AG04450 (cell line): ENCODE measurements at regions of chr1 and their contacts with region 1.

Region 1: GRCh38 chr1:107782217-107782845 is 182.6 kb downstream of the VAV3 start:
- DNase-seq: peak; percentile 18
- H3K4me3 ChIP-seq: no peak overlapping the region
- H3K27ac ChIP-seq: no peak overlapping the region
- H3K27me3 ChIP-seq: no peaks in the 10 kb centered on the region
- CTCF ChIP-seq: peak; percentile 71

Region 2: DNA sequence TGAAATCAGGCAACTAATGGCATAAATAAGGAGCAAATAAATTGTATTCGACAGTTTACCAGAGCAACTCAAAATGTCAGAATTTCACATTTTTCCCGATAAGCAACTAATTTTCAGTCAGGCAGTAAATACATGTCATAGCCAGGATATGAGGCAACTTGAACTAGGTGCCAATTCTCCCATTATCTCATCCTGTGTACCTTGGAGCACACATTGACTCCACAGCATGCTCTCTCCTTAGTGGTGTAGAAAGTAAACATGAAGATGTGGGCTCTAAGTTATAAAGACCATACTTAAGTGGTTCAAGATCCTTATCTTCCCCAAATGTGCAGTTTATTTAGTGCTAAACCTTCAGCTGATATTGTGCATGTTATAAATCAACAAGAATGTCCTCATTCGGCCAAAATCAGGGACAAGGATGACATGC is 15.2 kb before region 1 on chr1:
- CTCF ChIA-PET with region 1: interaction called, 13 read pairs
- POLR2A ChIA-PET with region 1: no interaction called
- DNase-seq: no peak
- H3K4me3 ChIP-seq: no peak overlapping the region
- H3K27ac ChIP-seq: no peak overlapping the region
- H3K27me3 ChIP-seq: no peaks in the 10 kb centered on the region
- CTCF ChIP-seq: no peak

Region 3: DNA sequence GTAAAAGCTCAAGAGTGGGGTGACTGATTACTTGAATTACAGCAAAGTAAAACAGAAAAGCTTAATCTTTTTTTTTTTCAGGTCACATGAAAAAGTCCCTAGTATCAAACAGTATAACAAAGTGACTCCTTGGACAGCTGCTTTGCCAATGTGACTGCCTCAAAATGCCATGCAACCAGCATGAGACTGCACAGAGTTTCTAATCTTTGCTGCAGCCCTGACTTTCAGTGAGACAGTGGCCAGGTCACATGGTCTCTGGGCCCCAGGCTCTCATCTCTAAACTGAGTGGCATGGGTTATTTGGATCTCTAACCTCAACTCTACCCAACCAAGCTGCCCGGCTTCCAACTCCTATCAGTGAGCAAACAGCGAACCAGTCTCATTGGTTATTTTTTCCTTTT is 13.7 kb after region 1 on chr1:
- CTCF ChIA-PET with region 1: interaction called, 49 read pairs
- POLR2A ChIA-PET with region 1: no interaction called
- DNase-seq: no peak
- H3K4me3 ChIP-seq: no peak overlapping the region
- H3K27ac ChIP-seq: no peak overlapping the region
- H3K27me3 ChIP-seq: no peaks in the 10 kb centered on the region
- CTCF ChIP-seq: no peak

Region 4: DNA sequence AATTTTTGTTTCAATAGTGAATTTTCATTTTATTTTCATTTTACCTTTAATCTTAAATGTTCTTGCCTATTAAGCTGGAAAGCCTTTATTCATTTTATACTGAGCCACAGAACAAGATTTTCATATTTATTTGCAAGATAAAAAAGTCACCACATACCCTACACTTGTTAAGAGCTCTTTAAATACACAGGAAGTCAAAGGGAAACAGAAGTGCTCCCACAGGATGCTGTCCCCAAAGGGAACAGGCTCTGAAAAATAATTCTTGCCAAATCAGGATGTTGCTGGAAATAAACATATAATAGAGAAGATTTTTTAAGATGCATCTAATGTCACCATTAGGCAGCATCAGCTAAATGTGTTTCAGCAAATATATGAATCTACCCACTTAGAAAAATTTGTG is 69.1 kb after region 1 on chr1:
- CTCF ChIA-PET with region 1: no interaction called
- POLR2A ChIA-PET with region 1: no interaction called
- DNase-seq: no peak
- H3K4me3 ChIP-seq: no peak overlapping the region
- H3K27ac ChIP-seq: no peak overlapping the region
- H3K27me3 ChIP-seq: no peaks in the 10 kb centered on the region
- CTCF ChIP-seq: no peak

Region 5: GRCh38 chr1:108118018-108118902 is 335.9 kb after region 1 on chr1:
- CTCF ChIA-PET with region 1: interaction called, 422 read pairs
- POLR2A ChIA-PET with region 1: no interaction called
- DNase-seq: no peak
- H3K4me3 ChIP-seq: no peak overlapping the region
- H3K27ac ChIP-seq: no peak overlapping the region
- H3K27me3 ChIP-seq: peaks cover 7% of the 10 kb centered on the region
- CTCF ChIP-seq: no peak

Region 6: GRCh38 chr1:108125312-108126138 is 343.2 kb after region 1 on chr1:
- CTCF ChIA-PET with region 1: interaction called, 422 read pairs
- POLR2A ChIA-PET with region 1: interaction called, 4 read pairs
- DNase-seq: peak; percentile 69
- H3K4me3 ChIP-seq: no peak overlapping the region
- H3K27ac ChIP-seq: no peak overlapping the region
- H3K27me3 ChIP-seq: peaks cover 3% of the 10 kb centered on the region
- CTCF ChIP-seq: peak; percentile 97

Region 7: DNA sequence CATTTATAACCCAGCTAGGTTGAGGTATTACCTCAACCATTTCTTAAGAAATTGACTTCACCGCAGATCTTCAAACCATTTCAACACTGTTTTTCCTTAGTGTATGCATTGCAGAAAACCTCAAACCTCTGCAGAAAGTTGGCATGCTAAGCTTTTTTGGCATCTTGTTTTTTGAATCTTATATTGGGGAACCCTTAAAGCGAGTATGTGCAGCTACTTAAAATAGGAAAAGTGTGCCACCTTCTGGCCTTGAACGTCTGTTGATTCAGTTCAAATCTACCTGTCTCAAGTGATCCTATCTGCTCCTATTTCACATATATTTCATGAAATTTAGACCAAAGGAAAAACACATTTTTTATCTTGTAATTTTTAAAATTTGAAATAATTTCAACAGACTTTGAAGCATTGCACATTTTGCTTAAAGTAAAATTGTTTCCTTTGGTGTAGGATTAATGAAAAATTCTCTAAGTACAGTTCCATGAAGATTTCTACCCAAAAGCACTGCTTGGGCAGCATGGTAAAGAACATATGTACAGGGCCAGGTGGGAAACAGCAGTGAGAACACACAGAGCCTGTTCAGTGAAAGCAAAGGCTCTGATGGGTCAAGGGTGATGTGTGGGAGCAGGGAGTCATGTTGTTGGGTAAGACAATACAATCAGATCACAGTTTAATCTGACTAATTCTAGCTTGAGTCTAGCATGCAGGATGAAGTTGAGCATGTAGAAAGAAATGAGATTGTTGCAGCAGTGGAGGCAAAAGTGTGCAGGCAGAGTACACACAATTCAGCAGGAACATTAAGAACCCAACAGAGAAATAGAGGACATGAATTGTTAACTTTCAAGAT is 861.4 kb after region 1 on chr1:
- CTCF ChIA-PET with region 1: interaction called, 10 read pairs
- POLR2A ChIA-PET with region 1: no interaction called
- DNase-seq: peak; percentile 62
- H3K4me3 ChIP-seq: no peak overlapping the region
- H3K27ac ChIP-seq: no peak overlapping the region
- H3K27me3 ChIP-seq: no peaks in the 10 kb centered on the region
- CTCF ChIP-seq: peak; percentile 63